ENCODE measurements at regions of chr2 and their contacts with region 1.

Region 1: GRCh38 chr2:152717228-152718075 is at the start of gene PRPF40A:
- DNase-seq: peak; percentile 95 to 98
- H3K4me3 ChIP-seq: peak within 1 kb of the TSS; percentile 92 to 98 (median 96)
- H3K27ac ChIP-seq: peak within 1 kb of the TSS; percentile 100
- H3K4me1 ChIP-seq: peaks cover 0 to 7% (median 2%) of the 10 kb centered on the region in 4 experiments; a peak in 2 of 7 replicates
- H3K27me3 ChIP-seq: no peaks in the 10 kb centered on the region
- CTCF ChIP-seq: peak in 1 of 3 experiments; percentile 12; a peak in 1 of 4 replicates
- EP300 ChIP-seq: no peak; a peak in 1 of 3 replicates
- POLR2A ChIP-seq: peak; percentile 81 to 83
- RAD21 ChIP-seq: no peak
- total RNA-seq, gene PRPF40A: 163 and 176 TPM in 2 replicates

Region 2: DNA sequence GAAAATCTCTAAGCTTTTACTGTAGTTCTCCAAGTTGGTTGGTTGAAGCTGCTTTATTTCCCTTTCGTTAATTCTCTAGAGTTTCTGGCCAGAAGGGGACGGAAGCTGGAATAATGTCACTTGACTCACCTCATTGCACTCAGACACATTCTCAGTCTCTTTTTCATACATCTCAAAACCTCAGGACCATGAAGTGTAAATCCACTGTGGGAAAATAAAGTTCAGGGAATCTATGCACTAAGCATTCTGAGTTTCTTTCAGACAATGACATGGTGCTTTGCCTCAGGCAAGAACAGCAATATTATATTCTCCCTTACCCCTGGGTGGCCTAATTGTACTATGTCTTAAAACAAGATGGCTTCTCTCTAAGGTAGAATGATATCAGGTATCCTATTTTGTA is 168.0 kb before region 1 on chr2:
- CTCF ChIA-PET with region 1: no interaction called
- POLR2A ChIA-PET with region 1: no interaction called
- DNase-seq: no peak
- H3K4me3 ChIP-seq: no peak overlapping the region
- H3K27ac ChIP-seq: no peak overlapping the region
- H3K4me1 ChIP-seq: no peaks in the 10 kb centered on the region
- H3K27me3 ChIP-seq: peaks cover 0 to 2% (median 0%) of the 10 kb centered on the region in 4 experiments; a peak in 1 of 7 replicates
- CTCF ChIP-seq: no peak
- EP300 ChIP-seq: no peak
- POLR2A ChIP-seq: no peak
- RAD21 ChIP-seq: no peak

Region 3: GRCh38 chr2:152594022-152594766 is 123.3 kb before region 1 on chr2:
- CTCF ChIA-PET with region 1: no interaction called
- POLR2A ChIA-PET with region 1: no interaction called
- DNase-seq: no peak
- H3K4me3 ChIP-seq: no peak overlapping the region
- H3K27ac ChIP-seq: no peak overlapping the region
- H3K4me1 ChIP-seq: peaks cover 0 to 4% (median 2%) of the 10 kb centered on the region in 4 experiments; a peak in 2 of 7 replicates
- H3K27me3 ChIP-seq: peaks cover 0 to 1% (median 0%) of the 10 kb centered on the region in 4 experiments; a peak in 1 of 7 replicates
- CTCF ChIP-seq: no peak
- EP300 ChIP-seq: no peak
- POLR2A ChIP-seq: no peak
- RAD21 ChIP-seq: no peak

Region 4: DNA sequence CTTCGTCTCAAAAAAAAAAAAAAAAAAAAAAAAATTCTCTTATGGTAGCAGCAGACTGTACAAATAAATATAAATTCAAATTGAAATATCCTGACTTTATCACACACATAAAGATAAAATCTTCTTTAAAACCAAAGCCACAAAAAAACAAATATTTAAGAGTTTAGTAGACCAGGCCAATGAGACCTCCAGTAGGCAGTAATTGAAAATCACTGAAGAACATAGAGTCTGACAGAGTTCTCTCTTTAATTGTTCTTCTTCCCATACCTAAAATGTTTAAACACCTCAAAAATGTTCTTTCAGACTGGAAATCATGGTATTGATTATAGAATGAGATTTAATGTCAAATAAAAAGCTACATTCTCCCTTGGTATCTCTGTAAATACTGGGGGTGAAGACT is 21.0 kb before region 1 on chr2:
- CTCF ChIA-PET with region 1: interaction called, 6 read pairs
- POLR2A ChIA-PET with region 1: interaction called, 68 read pairs
- DNase-seq: no peak
- H3K4me3 ChIP-seq: no peak overlapping the region
- H3K27ac ChIP-seq: no peak overlapping the region
- H3K4me1 ChIP-seq: no peaks in the 10 kb centered on the region
- H3K27me3 ChIP-seq: no peaks in the 10 kb centered on the region
- CTCF ChIP-seq: no peak
- EP300 ChIP-seq: no peak
- POLR2A ChIP-seq: no peak
- RAD21 ChIP-seq: no peak

Region 5: GRCh38 chr2:152730591-152731303 is 13.3 kb after region 1 on chr2:
- CTCF ChIA-PET with region 1: interaction called, 15 read pairs
- POLR2A ChIA-PET with region 1: interaction called, 23 read pairs
- DNase-seq: no peak
- H3K4me3 ChIP-seq: no peak overlapping the region
- H3K27ac ChIP-seq: no peak overlapping the region
- H3K4me1 ChIP-seq: no peaks in the 10 kb centered on the region
- H3K27me3 ChIP-seq: no peaks in the 10 kb centered on the region
- CTCF ChIP-seq: no peak
- EP300 ChIP-seq: no peak
- POLR2A ChIP-seq: no peak
- RAD21 ChIP-seq: no peak

Region 6: GRCh38 chr2:152743002-152743401 is 25.6 kb after region 1 on chr2:
- CTCF ChIA-PET with region 1: interaction called, 10 read pairs
- POLR2A ChIA-PET with region 1: interaction called, 10 read pairs
- DNase-seq: no peak
- H3K4me3 ChIP-seq: no peak overlapping the region
- H3K27ac ChIP-seq: no peak overlapping the region
- H3K4me1 ChIP-seq: no peaks in the 10 kb centered on the region
- H3K27me3 ChIP-seq: no peaks in the 10 kb centered on the region
- CTCF ChIP-seq: peak in 1 of 3 experiments; percentile 36; a peak in 2 of 4 replicates
- EP300 ChIP-seq: no peak
- POLR2A ChIP-seq: no peak
- RAD21 ChIP-seq: peak; percentile 32 to 33